ENCODE measurements at regions of chr20 and their contacts with region 1.

Region 1: DNA sequence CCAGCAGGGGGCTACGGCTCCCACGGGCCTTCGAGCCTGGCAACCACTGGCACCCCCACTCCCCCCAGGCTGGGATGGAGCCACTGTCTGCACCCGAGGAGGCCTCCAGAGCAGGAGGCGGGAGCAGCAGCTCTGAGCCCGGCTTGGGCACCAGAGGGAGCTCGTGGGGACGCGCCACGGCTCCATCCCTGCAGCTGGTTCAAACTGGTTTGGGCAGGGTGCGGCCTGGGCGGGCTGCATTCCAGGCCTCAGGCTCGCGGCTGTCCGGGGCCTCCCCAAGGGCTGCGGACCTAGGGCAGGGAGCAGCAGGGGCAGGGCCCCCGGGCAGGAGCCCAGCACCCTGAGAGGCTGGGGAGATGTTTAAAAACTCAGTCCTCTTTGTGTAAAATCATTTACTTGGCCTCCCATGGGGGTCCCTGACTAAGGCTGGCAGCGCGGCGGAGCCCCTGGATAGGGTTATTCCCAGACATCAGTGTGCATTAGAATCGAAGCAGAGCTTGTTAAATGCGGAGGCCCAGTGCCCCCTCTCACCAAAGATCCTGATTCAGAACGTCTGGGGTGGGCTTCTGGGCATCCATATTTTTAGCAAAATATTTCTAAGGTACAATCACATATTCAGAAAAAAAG is 4.1 kb upstream of the BCAS4 start:
- DNase-seq: no peak
- H3K4me3 ChIP-seq: no peak overlapping the region
- CTCF ChIP-seq: peak; percentile 99

Region 2: DNA sequence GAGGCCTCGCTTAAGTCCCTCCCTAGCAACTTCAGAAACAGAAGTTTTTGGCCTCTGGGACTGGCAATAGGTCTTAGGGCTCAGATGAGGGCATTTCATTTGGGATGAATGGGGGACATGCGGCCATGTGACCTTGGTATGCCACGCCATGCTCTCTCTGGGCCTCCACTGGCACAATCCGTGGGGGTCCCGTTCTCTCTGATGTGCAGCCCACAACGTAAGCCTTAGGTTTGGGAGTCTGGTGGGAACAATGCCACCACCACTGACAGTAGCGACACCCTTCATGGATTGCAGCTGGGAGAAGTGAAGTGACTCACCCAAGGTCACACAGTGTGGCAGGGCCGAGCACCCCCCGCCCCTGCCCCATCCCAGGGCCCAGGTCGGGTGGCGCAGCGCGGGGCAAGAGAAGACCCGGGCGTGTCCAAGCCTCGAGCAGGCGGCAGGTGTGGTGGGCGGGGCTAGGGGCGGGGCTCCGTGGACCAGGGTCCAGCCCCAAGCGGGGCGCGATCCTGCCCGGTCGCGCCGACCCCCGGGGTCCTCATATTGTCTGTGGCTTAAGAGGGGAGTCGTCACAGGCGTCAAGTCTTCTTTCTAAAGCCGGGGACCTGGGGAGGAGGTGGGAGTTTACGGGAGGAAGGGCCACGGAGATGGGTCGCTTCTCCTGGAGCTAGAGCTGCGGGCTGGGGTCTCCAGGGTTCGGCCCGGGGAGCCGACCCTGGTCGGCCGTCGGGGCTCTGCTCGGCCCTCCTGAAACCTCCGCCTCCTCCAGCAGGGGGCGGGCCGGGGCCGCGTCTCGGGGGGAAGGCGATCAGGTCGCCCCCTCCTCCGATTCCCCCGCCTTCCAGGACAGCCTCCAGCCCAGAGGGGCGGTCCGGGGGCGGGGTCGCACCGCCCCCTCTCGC is 600.8 kb before region 1 on chr20:
- CTCF ChIA-PET with region 1: interaction called, 19 read pairs
- POLR2A ChIA-PET with region 1: no interaction called
- DNase-seq: no peak
- H3K4me3 ChIP-seq: peak overlapping the region; percentile 94
- CTCF ChIP-seq: peak; percentile 92

Region 3: DNA sequence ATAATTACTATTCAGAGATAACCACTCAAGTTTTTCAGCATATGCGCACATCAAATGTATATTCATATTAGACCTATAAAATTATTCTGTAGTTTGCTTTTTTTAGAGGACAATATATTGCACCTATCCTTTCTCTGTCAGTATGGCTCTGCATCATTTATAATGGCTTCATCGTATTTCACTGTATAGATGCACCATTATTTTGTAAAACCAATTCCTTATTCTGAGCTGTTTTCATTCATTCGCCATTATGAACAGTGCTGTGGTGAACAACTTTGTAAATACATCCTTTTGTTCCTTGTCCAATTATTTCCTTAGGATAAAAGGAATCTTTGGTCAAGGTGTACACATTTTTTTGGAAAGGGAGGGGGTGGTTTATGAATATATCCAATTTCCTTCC is 25.1 kb before region 1 on chr20:
- CTCF ChIA-PET with region 1: interaction called, 11 read pairs
- POLR2A ChIA-PET with region 1: no interaction called
- DNase-seq: no peak
- H3K4me3 ChIP-seq: no peak overlapping the region
- CTCF ChIP-seq: no peak

Region 4: DNA sequence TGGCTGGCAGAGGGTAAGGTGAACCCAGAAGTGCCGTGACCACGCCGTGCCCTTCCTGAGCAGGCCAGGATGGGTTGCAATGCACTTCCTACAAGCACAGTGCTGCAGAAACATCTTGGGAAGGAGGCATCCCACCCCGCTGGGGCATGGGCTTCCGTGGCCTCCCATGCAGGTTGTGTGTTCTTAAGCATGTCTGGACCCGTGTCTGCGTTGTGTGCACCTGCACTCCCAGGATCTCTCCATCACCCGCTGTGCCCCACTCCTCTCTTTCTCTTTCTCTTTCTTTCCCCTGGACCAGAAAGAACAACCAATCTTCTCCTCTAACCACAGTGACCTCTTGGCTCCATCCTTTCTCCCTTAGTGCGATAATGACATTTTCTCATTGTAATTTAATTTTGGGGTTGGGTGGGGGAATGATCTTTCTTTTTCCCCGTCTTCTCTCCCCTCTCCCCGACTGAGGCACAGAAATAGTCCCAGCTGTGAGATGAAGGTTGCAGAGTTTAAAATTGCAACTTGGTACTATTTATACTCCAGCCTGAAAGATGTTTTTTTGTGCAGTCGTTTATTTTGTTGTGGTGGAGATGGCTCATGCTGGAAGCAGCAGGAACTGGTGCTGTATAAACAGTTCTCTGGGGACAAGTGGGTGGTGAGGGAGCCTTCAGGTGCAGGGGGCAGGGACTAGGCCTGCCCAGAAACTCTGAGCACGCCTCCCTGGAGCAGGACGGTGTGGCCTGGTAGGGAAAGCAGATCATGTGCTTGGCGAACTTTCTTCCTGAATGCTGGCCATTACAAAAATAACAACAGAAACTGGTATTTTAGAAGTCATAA is 24.6 kb after region 1 on chr20:
- CTCF ChIA-PET with region 1: interaction called, 42 read pairs
- POLR2A ChIA-PET with region 1: no interaction called
- DNase-seq: peak; percentile 38
- H3K4me3 ChIP-seq: no peak overlapping the region
- CTCF ChIP-seq: no peak

Region 5: GRCh38 chr20:50913690-50914375 is 123.1 kb after region 1 on chr20:
- CTCF ChIA-PET with region 1: interaction called, 332 read pairs
- POLR2A ChIA-PET with region 1: no interaction called
- DNase-seq: no peak
- H3K4me3 ChIP-seq: no peak overlapping the region
- CTCF ChIP-seq: no peak

Region 6: GRCh38 chr20:50958615-50959542 is 168.1 kb after region 1 on chr20 and contains the start of gene MOCS3:
- CTCF ChIA-PET with region 1: interaction called, 33 read pairs
- POLR2A ChIA-PET with region 1: interaction called, 7 read pairs
- DNase-seq: peak; percentile 63
- H3K4me3 ChIP-seq: peak within 1 kb of the TSS; percentile 98
- CTCF ChIP-seq: no peak

Region 7: DNA sequence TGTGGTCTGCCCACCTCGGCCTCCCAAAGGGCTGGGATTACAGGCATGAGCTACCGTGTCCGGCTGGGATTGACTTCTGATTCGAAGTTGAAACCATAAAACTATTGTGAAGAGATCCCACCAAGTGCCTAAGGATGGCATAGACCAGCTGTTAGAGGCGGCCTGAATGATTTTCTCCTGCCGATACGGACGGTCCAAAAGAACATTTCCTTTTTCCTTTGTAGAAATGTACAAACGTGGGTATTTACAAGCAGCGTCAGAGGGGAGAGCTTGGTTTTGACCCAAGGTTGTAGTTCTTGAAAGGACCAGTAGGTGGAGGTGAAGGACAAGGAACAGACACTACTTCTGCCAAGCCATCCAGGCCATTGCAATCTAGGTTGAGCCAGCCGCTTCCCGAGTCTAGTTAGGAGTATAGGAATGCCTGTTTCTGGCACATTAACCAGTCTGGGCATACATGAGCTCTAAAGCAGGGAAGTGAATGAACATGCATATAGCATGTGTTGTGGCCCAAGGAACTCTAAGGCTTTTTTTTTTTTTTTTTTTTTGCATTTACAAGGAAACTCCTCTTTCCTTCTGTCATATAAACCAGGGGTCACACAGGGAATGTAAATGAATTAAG is 196.9 kb after region 1 on chr20:
- CTCF ChIA-PET with region 1: interaction called, 111 read pairs
- POLR2A ChIA-PET with region 1: no interaction called
- DNase-seq: peak; percentile 60
- H3K4me3 ChIP-seq: no peak overlapping the region
- CTCF ChIP-seq: peak; percentile 79